Activated CD8-positive, alpha-beta memory T cell treated with anti-CD3 and anti-CD28 coated beads, Interleukin-2, amount 10 ng/mL, durations not matched to agents 7 days and 5 days (primary cell): ENCODE measurements at regions of chr20 and their contacts with region 1.

Region 1: DNA sequence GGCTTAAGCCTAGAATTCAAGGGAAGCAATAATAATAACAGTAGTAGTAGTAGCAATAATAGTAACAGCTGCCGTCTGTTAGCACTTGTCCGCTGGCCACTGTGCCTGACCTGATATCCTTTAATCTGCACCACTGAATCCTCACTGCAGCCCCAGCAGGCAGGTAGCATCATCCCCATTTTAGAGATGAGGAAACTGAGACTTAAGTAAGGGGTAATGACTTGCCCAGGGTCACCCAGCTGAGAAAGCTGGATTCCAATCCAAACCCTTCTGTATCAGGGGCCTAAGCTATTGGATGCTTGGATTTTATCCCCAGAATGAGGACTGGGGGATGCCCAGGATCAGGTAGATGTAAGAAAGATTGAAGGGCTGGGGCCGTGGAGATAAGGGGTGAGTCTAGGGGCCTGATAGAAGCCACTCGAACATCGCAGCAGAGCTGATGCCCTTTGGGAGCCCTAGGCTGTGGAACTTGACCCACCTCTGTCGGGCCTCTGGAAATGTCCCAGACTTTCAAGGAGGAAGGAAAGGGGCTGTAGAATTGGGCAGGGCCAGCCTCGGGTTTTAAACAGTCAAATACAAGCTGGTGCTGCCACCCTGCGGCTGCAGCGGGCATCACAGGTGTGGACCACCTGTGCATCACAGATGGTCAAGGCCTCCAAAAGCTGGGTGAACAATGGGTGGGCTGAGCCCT is 102.1 kb upstream of the MYL9 start:
- DNase-seq: peak; percentile 77
- ATAC-seq: peak; percentile 59
- H3K4me3 Mint-ChIP-seq: no peak overlapping the region
- H3K27ac Mint-ChIP-seq: no peak overlapping the region
- H3K4me1 Mint-ChIP-seq: peaks cover 3% of the 10 kb centered on the region
- H3K27me3 Mint-ChIP-seq: peaks cover 2% of the 10 kb centered on the region

Region 2: GRCh38 chr20:36154700-36155628 is 284.2 kb before region 1 on chr20 and contains the start of gene EPB41L1:
- CTCF ChIA-PET with region 1: interaction called, 13 read pairs
- DNase-seq: no peak
- ATAC-seq: no peak
- H3K4me3 Mint-ChIP-seq: no peak within 1 kb of the TSS
- H3K27ac Mint-ChIP-seq: no peak within 1 kb of the TSS
- H3K4me1 Mint-ChIP-seq: peaks cover 2% of the 10 kb centered on the region
- H3K27me3 Mint-ChIP-seq: peaks cover 39% of the 10 kb centered on the region
- total RNA-seq, gene EPB41L1: 0.28 TPM in 1 of 2 experiments, not detected in the other

Region 3: GRCh38 chr20:36214684-36215256 is 224.4 kb before region 1 on chr20:
- CTCF ChIA-PET with region 1: interaction called, 14 read pairs
- DNase-seq: no peak
- ATAC-seq: peak; percentile 36
- H3K4me3 Mint-ChIP-seq: no peak overlapping the region
- H3K27ac Mint-ChIP-seq: no peak overlapping the region
- H3K4me1 Mint-ChIP-seq: no peaks in the 10 kb centered on the region
- H3K27me3 Mint-ChIP-seq: peaks cover 6% of the 10 kb centered on the region

Region 4: DNA sequence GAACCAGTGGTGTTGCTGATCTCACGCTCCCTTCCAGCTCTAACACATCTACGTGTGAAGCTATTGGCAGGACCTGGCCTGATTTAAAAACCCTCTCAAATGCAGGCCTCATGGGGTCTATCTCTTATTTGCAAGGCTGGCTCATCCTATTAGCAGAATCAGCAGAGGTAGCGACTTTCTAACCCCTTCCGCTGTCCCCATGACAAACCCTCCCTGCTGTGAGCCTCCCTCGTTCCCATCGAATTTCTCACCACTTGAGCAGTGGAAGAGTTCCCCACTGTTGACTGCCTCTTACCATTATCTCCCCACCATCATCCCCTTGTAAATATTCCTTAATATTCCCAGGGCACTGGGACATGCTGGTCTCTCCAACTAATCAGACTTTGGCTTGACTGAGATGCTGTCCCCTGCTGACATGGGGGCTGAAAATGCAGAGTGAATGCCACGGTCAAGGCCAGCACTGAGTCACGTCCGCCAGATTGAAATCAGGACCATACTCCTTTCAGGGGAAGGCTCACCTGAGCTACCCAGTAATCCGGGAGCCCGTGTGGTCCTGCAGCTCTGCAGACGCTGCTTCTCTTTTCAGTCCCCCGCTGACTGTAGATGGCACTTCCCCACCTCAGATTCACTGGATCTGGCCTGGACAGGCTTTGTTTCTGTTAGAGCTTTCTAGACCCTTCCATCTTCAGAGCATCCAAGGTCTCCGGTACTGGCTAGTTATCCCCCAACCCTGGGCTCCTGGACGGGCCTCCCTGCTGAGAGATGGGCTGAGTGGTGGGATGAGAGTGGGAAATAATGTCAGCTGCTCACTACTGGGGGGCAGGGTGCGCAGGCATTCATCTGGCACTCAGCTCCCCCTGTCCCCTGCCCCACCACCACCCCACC is 179.8 kb before region 1 on chr20:
- CTCF ChIA-PET with region 1: no interaction called
- DNase-seq: no peak
- ATAC-seq: no peak
- H3K4me3 Mint-ChIP-seq: no peak overlapping the region
- H3K27ac Mint-ChIP-seq: no peak overlapping the region
- H3K4me1 Mint-ChIP-seq: no peaks in the 10 kb centered on the region
- H3K27me3 Mint-ChIP-seq: no peaks in the 10 kb centered on the region

Region 5: DNA sequence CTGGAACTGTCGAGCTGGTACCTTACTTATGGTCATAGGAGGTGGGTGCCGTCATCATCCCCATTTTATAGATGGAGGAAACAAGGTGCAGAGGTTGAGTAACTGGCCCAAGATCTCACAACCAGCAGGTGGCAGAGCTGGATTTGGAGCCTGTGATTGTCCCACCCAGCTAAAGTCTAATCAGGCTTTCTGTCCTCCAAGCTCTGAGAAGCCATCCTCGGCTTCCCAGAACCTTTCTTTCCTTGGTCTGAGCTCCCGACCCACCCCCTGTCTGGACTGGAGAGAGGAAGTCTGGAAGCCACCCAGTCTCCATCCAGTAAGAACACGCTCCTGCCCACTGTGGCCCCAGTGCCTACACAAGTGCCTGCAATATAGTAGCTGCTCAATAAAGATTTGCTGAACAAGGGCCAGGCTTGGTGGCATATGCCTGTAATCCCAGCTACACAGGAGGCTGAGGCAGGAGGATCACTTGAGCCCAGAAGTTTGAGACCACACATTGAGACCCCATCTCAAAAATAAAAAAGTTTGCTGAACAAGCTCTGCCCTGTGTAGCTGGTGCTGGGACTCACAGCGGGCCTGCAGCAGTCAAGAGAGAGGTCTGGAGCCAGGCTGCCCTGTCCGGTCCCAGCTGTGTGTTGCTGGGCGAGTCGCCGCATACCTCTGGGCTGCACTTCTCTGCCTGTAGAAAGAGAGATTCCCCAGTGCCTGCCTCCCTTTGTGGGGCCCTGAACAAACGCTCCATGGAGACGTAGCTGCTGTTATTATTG is 165.6 kb before region 1 on chr20:
- CTCF ChIA-PET with region 1: interaction called, 15 read pairs
- DNase-seq: no peak
- ATAC-seq: no peak
- H3K4me3 Mint-ChIP-seq: no peak overlapping the region
- H3K27ac Mint-ChIP-seq: no peak overlapping the region
- H3K4me1 Mint-ChIP-seq: no peaks in the 10 kb centered on the region
- H3K27me3 Mint-ChIP-seq: peaks cover 20% of the 10 kb centered on the region

Region 6: DNA sequence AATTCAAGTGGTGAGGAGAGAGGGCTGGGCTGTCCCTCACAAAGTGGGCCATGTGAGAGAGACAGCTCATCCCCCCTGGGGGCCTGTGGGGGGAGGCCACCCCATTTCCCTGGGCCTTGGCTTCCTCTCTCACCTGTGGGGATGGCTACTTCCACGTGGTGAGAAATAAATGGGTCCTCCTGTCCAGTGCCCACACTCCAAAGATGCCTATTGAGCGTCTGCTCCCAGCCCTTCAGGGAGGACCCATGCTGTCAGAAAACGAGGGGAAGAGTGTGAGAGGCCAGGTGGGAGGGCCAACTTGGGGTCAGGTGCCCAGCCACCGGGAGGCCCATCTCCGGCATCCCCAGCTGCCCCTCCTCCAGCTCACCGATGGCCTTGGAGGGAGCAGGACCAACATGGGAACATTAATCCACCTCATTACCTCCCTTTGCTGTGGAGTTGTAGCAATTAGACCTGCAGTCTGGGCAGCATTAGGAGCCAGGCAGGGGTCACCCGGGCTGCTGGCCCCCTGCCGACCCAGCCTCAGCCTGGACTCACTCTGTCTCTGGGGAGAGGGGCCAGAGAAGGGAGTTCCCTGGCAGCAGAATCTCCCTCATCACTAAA is 108.1 kb before region 1 on chr20:
- CTCF ChIA-PET with region 1: no interaction called
- DNase-seq: no peak
- ATAC-seq: no peak
- H3K4me3 Mint-ChIP-seq: no peak overlapping the region
- H3K27ac Mint-ChIP-seq: no peak overlapping the region
- H3K4me1 Mint-ChIP-seq: no peaks in the 10 kb centered on the region
- H3K27me3 Mint-ChIP-seq: peaks cover 29% of the 10 kb centered on the region

Region 7: DNA sequence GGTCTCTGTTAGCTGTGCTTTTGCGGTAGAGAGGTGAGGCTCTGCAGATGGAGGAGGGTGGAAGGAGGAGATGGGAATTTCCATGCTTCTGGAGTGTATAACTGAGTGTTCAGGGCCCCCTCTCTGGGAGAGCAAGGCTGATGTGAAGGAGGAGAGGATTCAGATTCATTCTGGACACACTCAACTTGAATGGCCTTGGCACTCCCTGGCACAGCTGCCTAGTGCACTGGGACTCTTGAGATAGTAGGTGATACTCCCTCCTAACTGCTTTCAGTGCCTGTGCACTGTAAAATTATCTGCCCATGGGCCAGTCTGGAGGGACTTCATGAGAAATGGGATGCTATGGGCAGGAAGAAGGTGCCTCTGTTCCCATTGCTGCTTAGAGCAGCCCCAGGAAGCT is 47.9 kb after region 1 on chr20:
- CTCF ChIA-PET with region 1: no interaction called
- DNase-seq: no peak
- ATAC-seq: no peak
- H3K4me3 Mint-ChIP-seq: no peak overlapping the region
- H3K27ac Mint-ChIP-seq: no peak overlapping the region
- H3K4me1 Mint-ChIP-seq: peaks cover 11% of the 10 kb centered on the region
- H3K27me3 Mint-ChIP-seq: no peaks in the 10 kb centered on the region